ENCODE measurements at regions of chr4 and their contacts with region 1.

Region 1: DNA sequence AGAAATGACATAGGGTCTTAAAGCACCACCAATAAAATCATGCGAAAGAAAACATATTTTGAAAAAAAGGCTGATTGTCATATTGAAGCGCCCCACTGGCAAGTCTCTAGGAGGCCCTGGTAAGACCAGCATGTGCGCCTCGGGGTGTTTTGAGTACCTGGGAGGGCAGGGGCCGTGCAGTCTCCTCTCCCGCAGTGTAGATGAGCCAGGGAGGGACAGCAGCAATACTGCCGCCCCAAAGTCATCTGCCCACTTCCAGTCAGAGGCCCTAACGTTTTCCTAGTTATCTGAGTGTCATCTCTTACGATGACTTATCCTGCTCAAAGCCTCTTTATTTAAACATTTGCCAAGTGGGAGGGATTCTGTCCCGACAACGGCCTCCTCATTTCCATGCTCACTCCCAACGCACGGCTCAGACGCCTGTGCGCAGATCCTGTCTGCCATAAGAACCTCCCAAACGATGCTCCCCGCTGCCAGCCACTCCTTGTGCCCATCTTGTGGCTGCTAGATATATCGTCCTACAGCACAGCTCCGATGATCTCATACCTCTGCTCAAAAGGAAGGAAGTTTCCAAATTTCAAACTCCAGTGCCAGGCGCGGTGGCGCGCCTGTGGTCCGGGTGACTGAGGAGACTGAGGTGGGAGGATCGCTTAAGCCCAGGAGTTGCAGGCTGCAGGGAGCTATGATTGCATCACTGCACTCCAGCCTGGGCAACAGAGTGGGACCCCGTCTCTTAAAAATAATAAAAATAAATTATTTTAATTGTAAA is 17.2 kb upstream of the SCRG1 start:
- DNase-seq: no peak
- ATAC-seq: peak; percentile 57

Region 2: DNA sequence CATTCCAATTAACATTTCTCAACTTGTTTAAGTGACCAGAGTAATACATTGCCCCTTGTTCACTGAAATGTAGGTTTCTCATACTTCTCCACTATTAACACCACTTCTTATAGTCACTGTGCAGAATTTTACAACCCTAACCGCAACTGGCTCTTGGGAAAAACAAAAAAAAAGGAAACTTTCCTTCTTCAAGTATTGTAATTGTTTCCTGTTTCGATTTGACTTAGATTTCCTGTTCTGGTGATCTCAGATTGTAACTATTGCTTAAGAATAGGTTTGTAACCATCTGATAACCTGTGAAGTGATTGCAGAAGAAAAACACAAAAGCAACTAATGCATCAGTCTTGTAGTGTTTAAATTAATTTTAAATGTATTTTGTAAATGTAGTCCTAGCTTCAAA is 842.2 kb before region 1 on chr4:
- intact Hi-C with region 1: no loop called
- DNase-seq: no peak
- ATAC-seq: no peak

Region 3: DNA sequence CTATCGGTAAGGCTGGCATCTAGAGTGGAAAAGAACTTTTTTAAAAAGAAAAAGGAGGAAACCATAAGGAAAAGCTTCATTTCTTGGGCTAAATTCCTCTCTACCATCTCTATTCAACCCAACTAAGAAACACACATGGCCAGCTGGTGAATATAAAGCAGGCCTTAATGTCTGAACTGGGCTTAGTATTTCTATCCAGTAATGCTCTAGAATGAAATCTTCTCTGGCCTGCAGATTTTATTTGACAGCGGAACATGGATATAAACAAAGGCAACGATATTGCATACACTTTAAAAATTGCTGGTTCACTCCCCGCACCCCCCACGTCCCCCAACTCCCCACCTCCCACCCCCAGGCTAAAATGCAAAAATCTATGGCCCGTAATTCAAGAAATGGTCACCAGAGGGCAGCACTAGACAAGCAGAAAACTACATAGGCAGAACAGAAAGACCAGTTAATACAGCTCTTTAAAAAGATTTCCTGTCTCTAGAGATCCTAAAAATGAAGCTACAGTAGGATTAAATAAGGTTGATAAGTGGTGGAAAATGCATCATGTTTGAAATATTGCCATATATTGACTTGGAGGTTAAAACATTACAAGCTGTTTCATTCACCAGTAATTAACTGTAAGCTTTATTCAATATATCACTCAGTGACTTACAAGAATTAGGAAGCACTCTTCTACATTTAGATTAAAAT is 402.7 kb before region 1 on chr4:
- intact Hi-C with region 1: loop called (anchors 10 kb)
- DNase-seq: no peak
- ATAC-seq: peak; percentile 70

Region 4: GRCh38 chr4:173318648-173319211 is 97.3 kb before region 1 on chr4:
- intact Hi-C with region 1: loop called (anchors 5 kb)
- DNase-seq: no peak
- ATAC-seq: peak; percentile 57

Measured in sciatic nerve (tissue), 2 donors.